Naive thymus-derived CD4-positive, alpha-beta T cell (primary cell): ENCODE measurements at regions of chr1 and their contacts with region 1.

Region 1: GRCh38 chr1:21956720-21957552 is 19.8 kb upstream of the HSPG2 start:
- DNase-seq: peak; percentile 21 to 84 (median 76)
- ATAC-seq: peak; percentile 96
- H3K4me3 ChIP-seq: peak overlapping the region; percentile 43
- H3K4me3 Mint-ChIP-seq: peak overlapping the region; percentile 65 to 86 (median 80)
- H3K27ac ChIP-seq: peak overlapping the region; percentile 62
- H3K27ac Mint-ChIP-seq: peak overlapping the region; percentile 77 to 99 (median 93)
- H3K4me1 ChIP-seq: peaks cover 8 to 31% of the 10 kb centered on the region in 2 donors
- H3K4me1 Mint-ChIP-seq: peaks cover 17 to 44% (median 29%) of the 10 kb centered on the region in 7 donors
- H3K27me3 ChIP-seq: no peaks in the 10 kb centered on the region
- H3K27me3 Mint-ChIP-seq: peaks cover 0 to 7% (median 2%) of the 10 kb centered on the region in 5 donors

Region 2: DNA sequence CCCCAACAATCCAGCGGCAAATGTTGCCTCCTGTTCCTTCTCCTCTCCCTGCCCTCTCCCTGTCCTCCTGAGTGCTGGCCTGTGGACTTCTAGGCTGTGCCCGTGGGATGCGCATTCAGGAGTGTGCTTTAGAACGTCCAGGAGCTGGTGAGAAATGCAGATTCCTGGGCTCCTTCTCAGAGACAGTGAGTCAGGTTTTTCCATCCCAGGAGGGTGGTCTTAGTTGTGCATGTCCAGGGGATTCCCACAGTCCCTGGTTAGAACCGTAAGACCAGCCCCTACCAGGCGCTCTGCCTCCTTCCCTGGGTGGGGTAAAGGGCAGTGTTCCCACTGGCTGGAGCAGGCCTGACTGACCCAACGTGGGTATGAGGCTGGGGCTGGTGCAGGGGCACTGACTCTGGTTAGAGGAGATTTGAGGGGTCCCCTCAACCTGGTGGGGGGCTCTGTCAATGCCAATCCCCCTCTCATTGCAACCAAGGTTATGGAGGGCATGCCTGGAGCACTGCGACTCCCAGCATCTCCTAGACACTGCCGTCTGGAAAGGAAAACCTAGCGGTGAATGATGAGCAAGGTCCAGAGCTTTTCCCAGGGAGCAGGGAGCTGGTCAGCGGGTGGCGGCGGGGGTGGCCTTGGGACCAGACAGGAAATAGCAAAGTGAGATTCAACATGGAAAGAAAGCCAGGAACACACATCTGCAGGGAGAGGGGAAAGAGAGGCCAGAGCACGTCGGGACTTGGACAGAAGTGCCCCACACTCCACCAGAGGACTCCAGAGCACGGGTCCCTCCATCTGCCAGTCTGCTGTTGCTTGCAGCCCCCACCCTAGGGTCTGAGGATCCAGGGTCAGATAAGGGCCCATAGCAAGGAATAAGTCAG is 58.4 kb before region 1 on chr1:
- CTCF ChIA-PET with region 1: no interaction called
- POLR2A ChIA-PET with region 1: no interaction called
- intact Hi-C with region 1: no loop called
- DNase-seq: no peak
- ATAC-seq: no peak
- H3K4me3 ChIP-seq: no peak overlapping the region
- H3K4me3 Mint-ChIP-seq: peak overlapping the region in 1 of 10 donors; percentile 10
- H3K27ac ChIP-seq: no peak overlapping the region
- H3K27ac Mint-ChIP-seq: no peak overlapping the region
- H3K4me1 ChIP-seq: peaks cover 0 to 4% of the 10 kb centered on the region in 2 donors
- H3K4me1 Mint-ChIP-seq: peaks cover 0 to 9% (median 0%) of the 10 kb centered on the region in 7 donors
- H3K27me3 ChIP-seq: no peaks in the 10 kb centered on the region
- H3K27me3 Mint-ChIP-seq: no peaks in the 10 kb centered on the region

Region 3: GRCh38 chr1:21909787-21910503 is 47.0 kb before region 1 on chr1:
- CTCF ChIA-PET with region 1: no interaction called
- POLR2A ChIA-PET with region 1: no interaction called
- intact Hi-C with region 1: loop called in 1 of 2 experiments (anchors 2 kb)
- DNase-seq: peak in 6 of 9 donors; percentile 8 to 49 (median 14)
- ATAC-seq: peak; percentile 69
- H3K4me3 ChIP-seq: no peak overlapping the region
- H3K4me3 Mint-ChIP-seq: peak overlapping the region in 4 of 10 donors; percentile 13 to 64 (median 34)
- H3K27ac ChIP-seq: peak overlapping the region; percentile 45
- H3K27ac Mint-ChIP-seq: peak overlapping the region in 8 of 9 donors; percentile 34 to 79 (median 51)
- H3K4me1 ChIP-seq: peaks cover 0 to 7% of the 10 kb centered on the region in 2 donors
- H3K4me1 Mint-ChIP-seq: peaks cover 9 to 28% (median 17%) of the 10 kb centered on the region in 7 donors
- H3K27me3 ChIP-seq: no peaks in the 10 kb centered on the region
- H3K27me3 Mint-ChIP-seq: no peaks in the 10 kb centered on the region